ENCODE measurements at regions of chr7 and their contacts with region 1.

Region 1: GRCh38 chr7:158885624-158886023 is 29.3 kb downstream of the DYNC2I1 start:
- DNase-seq: peak; percentile 6
- ATAC-seq: no peak
- H3K4me3 ChIP-seq: no peak overlapping the region
- H3K27ac ChIP-seq: no peak overlapping the region
- H3K4me1 ChIP-seq: no peaks in the 10 kb centered on the region
- H3K27me3 ChIP-seq: no peaks in the 10 kb centered on the region
- CTCF ChIP-seq: peak; percentile 37
- POLR2A ChIP-seq: no peak
- RAD21 ChIP-seq: peak; percentile 32; the same call in 1 of the 2 replicates

Region 2: GRCh38 chr7:158846304-158846703 is 39.3 kb before region 1 on chr7:
- CTCF ChIA-PET with region 1: no interaction called
- POLR2A ChIA-PET with region 1: no interaction called
- dilution Hi-C with region 1: no loop called
- in situ Hi-C with region 1: no loop called
- intact Hi-C with region 1: loop called (anchors 1 kb)
- DNase-seq: no peak
- ATAC-seq: no peak
- H3K4me3 ChIP-seq: no peak overlapping the region
- H3K27ac ChIP-seq: no peak overlapping the region
- H3K4me1 ChIP-seq: no peaks in the 10 kb centered on the region
- H3K27me3 ChIP-seq: peaks cover 3% of the 10 kb centered on the region; the same call in 1 of the 2 replicates
- CTCF ChIP-seq: no peak
- POLR2A ChIP-seq: no peak
- RAD21 ChIP-seq: no peak

Measured in IMR-90 (cell line).